Activated naive CD4-positive, alpha-beta T cell treated with anti-CD3 and anti-CD28 coated beads, Interleukin-2, amount 10 ng/mL, durations not matched to agents 7 days and 5 days (primary cell): ENCODE measurements at regions of chr1 and their contacts with region 1.

Region 1: GRCh38 chr1:46527474-46528296 is 23.8 kb downstream of the KNCN start:
- DNase-seq: peak; percentile 84
- H3K4me3 Mint-ChIP-seq: no peak overlapping the region
- H3K27ac Mint-ChIP-seq: no peak overlapping the region
- H3K4me1 Mint-ChIP-seq: peaks cover 16% of the 10 kb centered on the region
- H3K27me3 Mint-ChIP-seq: peaks cover 82% of the 10 kb centered on the region

Region 2: DNA sequence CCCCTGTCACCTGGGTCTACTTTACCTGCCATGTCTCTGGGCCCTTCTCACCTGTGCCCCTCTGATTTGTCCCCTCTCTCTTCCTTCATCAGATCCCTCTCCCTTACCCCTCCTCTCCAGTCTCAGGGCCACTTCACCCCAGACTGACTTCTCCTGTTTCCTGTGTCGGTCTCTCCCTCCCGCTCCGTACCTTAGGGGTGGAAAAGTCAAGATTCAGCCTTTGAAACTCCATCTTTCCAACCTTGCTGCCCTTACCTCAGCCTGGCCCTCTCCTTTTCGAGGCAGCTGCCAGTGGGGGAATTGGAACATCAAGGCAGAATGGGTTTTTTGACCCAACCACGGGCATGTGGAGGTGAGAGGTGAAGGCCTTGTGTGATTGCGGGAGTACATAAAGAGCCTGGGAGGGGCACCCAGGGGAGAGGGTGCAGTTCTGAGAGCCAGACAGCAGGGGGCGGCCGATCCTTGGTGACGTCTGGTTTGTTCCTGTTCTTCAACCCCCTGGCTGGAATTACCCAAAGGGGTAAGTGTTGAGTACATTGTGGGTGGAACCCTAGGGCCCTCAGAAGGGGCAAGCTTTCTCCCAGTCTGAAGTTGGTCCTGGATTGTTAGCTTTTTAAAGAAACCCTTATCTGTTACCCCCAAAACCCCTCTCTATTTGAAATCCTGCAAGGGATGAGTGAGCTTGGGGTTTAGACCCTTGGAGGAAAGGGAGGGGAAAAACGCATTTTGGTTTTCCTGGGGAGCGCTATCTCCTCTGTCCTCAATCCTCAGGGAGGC is 50.3 kb before region 1 on chr1:
- CTCF ChIA-PET with region 1: interaction called, 76 read pairs
- DNase-seq: peak; percentile 83
- H3K4me3 Mint-ChIP-seq: no peak overlapping the region
- H3K27ac Mint-ChIP-seq: no peak overlapping the region
- H3K4me1 Mint-ChIP-seq: no peaks in the 10 kb centered on the region
- H3K27me3 Mint-ChIP-seq: peaks cover 78% of the 10 kb centered on the region

Region 3: GRCh38 chr1:46517010-46517600 is 10.6 kb before region 1 on chr1:
- CTCF ChIA-PET with region 1: interaction called, 20 read pairs
- DNase-seq: no peak
- H3K4me3 Mint-ChIP-seq: no peak overlapping the region
- H3K27ac Mint-ChIP-seq: no peak overlapping the region
- H3K4me1 Mint-ChIP-seq: peaks cover 6% of the 10 kb centered on the region
- H3K27me3 Mint-ChIP-seq: peaks cover 81% of the 10 kb centered on the region

Region 4: GRCh38 chr1:46547481-46548383 is 20.0 kb after region 1 on chr1:
- CTCF ChIA-PET with region 1: interaction called, 10 read pairs
- DNase-seq: peak; percentile 28
- H3K4me3 Mint-ChIP-seq: no peak overlapping the region
- H3K27ac Mint-ChIP-seq: peak overlapping the region; percentile 39
- H3K4me1 Mint-ChIP-seq: peaks cover 13% of the 10 kb centered on the region
- H3K27me3 Mint-ChIP-seq: peaks cover 80% of the 10 kb centered on the region

Region 5: GRCh38 chr1:46643368-46643775 is 115.7 kb after region 1 on chr1:
- CTCF ChIA-PET with region 1: no interaction called
- DNase-seq: no peak
- H3K4me3 Mint-ChIP-seq: no peak overlapping the region
- H3K27ac Mint-ChIP-seq: no peak overlapping the region
- H3K4me1 Mint-ChIP-seq: no peaks in the 10 kb centered on the region
- H3K27me3 Mint-ChIP-seq: no peaks in the 10 kb centered on the region